GM12878 (cell line): ENCODE measurements at regions of chr3 and their contacts with region 1.

Region 1: GRCh38 chr3:105836533-105836932 is 32.3 kb downstream of the CBLB start:
- DNase-seq: peak; percentile 68
- ATAC-seq: peak; percentile 81
- H3K4me3 ChIP-seq: peak overlapping the region; percentile 33; the same call in 1 of the 2 replicates
- H3K27ac ChIP-seq: peak overlapping the region; percentile 86
- H3K4me1 ChIP-seq: peaks cover 27% of the 10 kb centered on the region
- H3K27me3 ChIP-seq: no peaks in the 10 kb centered on the region
- CTCF ChIP-seq: 0 out of 6 replicates have a peak, but pooled peaks of 1 of the 3 experiments have one; percentile 5
- EP300 ChIP-seq: peak; percentile 80 to 86; a peak in 3 of 4 replicates
- POLR2A ChIP-seq: peak; percentile 31; the same call in 1 of the 2 replicates
- RAD21 ChIP-seq: peak; percentile 27

Region 2: GRCh38 chr3:105334138-105334882 is 502.2 kb before region 1 on chr3:
- CTCF ChIA-PET with region 1: no interaction called
- POLR2A ChIA-PET with region 1: no interaction called
- RAD21 ChIA-PET with region 1: no interaction called
- SMC1A ChIA-PET with region 1: no interaction called
- in situ Hi-C with region 1: no loop called
- intact Hi-C with region 1: no loop called
- DNase-seq: no peak
- ATAC-seq: peak; percentile 54
- H3K4me3 ChIP-seq: no peak overlapping the region
- H3K27ac ChIP-seq: no peak overlapping the region
- H3K4me1 ChIP-seq: no peaks in the 10 kb centered on the region
- H3K27me3 ChIP-seq: no peaks in the 10 kb centered on the region
- CTCF ChIP-seq: no peak
- EP300 ChIP-seq: no peak
- POLR2A ChIP-seq: no peak
- RAD21 ChIP-seq: no peak

Region 3: DNA sequence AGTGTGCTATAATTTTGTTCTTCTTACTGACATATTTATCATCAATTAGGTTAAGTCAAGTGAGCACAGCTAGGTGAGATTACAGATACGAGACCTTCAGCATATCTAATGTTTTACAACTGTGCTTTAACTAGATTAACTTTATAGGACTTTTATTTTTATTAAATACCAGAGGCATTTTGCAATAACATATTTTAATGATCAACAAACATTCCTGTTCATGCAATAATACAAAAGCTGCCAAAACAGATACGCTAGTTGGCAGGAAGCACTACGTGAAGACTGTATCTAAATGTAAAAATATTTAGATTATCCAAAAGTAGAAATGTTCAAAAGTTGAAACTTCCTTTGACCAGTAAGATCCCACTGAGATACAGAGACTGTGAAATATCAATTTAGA is 106.9 kb before region 1 on chr3:
- CTCF ChIA-PET with region 1: no interaction called
- POLR2A ChIA-PET with region 1: no interaction called
- RAD21 ChIA-PET with region 1: interaction called, 4 read pairs
- SMC1A ChIA-PET with region 1: interaction called, 14 read pairs
- in situ Hi-C with region 1: no loop called
- intact Hi-C with region 1: no loop called
- DNase-seq: no peak
- ATAC-seq: no peak
- H3K4me3 ChIP-seq: no peak overlapping the region
- H3K27ac ChIP-seq: no peak overlapping the region
- H3K4me1 ChIP-seq: no peaks in the 10 kb centered on the region
- H3K27me3 ChIP-seq: no peaks in the 10 kb centered on the region
- CTCF ChIP-seq: no peak
- EP300 ChIP-seq: no peak
- POLR2A ChIP-seq: no peak
- RAD21 ChIP-seq: no peak

Region 4: GRCh38 chr3:105812194-105812586 is 24.3 kb before region 1 on chr3:
- CTCF ChIA-PET with region 1: interaction called, 3 read pairs
- POLR2A ChIA-PET with region 1: no interaction called
- RAD21 ChIA-PET with region 1: interaction called, 10 read pairs
- SMC1A ChIA-PET with region 1: interaction called, 59 read pairs
- in situ Hi-C with region 1: no loop called
- intact Hi-C with region 1: no loop called
- DNase-seq: no peak
- ATAC-seq: no peak
- H3K4me3 ChIP-seq: no peak overlapping the region
- H3K27ac ChIP-seq: no peak overlapping the region
- H3K4me1 ChIP-seq: peaks cover 3% of the 10 kb centered on the region; the same call in 1 of the 2 replicates
- H3K27me3 ChIP-seq: no peaks in the 10 kb centered on the region
- CTCF ChIP-seq: no peak
- EP300 ChIP-seq: no peak
- POLR2A ChIP-seq: no peak
- RAD21 ChIP-seq: no peak

Region 5: DNA sequence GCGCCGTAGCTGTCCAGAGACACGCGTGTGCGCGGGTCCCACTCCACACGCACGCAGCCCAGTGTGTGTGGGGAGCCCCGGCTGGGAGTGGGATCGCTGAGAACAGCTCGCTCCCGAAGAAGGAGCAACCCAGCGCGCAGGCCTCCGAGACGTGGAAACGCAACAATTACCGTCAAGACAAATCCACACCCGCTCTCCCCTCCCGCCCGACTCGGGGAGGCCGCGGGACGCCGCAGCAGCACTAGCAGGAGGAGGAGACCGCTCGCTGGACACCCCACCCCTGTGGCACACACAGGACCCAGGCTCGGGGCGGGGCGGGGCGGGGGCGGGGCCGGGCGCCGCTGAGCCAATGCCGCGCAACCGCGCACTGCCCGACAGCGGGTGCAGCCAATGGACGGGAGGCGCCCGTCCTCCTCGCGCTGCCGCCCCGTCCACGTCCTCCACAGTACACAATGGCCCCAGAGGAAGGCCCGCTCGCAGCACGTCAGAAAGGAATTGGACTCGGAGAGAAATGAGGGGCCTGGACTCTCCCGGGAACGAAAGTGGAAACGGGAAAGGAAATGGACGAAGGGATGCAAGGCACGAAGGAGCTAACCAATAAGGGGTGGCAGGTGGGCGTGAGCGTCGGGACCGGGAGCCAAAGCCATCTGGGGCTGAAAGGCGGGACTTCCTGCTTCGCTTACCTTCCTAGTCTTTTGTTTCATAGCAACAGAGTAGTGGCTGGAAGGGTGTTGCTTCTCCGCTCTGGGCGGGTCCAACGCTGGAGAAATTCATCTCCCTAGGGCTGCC is 32.4 kb after region 1 on chr3 and contains the start of gene CBLB:
- CTCF ChIA-PET with region 1: interaction called, 4 read pairs
- POLR2A ChIA-PET with region 1: interaction called, 7 read pairs
- RAD21 ChIA-PET with region 1: interaction called, 119 read pairs
- SMC1A ChIA-PET with region 1: interaction called, 101 read pairs
- in situ Hi-C with region 1: no loop called
- intact Hi-C with region 1: loop called (anchors 1 kb)
- DNase-seq: peak; percentile 77
- ATAC-seq: peak; percentile 92
- H3K4me3 ChIP-seq: peak within 1 kb of the TSS; percentile 98
- H3K27ac ChIP-seq: peak within 1 kb of the TSS; percentile 94
- H3K4me1 ChIP-seq: peaks cover 7% of the 10 kb centered on the region
- H3K27me3 ChIP-seq: no peaks in the 10 kb centered on the region
- CTCF ChIP-seq: no peak
- EP300 ChIP-seq: 0 out of 4 replicates have a peak, but pooled peaks of 1 of the 2 experiments have one; percentile 6
- POLR2A ChIP-seq: peak; percentile 85
- RAD21 ChIP-seq: no peak
- polyA plus RNA-seq, gene CBLB: 17.2 to 17.6 TPM

Region 6: DNA sequence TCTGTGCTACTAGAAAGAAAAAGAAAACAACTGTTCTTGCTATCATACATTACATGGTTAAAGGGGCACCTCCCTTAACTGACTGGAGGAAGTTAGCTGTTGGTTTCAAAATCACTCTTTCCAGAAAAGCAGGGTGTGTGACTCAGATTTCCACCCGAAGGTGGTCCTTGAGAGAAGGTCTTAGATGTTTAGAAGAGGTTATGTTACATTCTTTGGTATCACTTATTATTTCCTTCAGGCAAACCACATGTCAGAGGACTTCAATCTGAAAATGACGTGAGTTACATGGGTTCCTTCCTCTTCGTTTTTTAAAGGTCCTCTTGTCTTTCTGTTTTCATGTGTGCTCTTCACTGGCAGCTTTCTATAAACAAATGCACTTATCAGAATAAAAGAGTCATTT is 340.2 kb after region 1 on chr3:
- CTCF ChIA-PET with region 1: no interaction called
- POLR2A ChIA-PET with region 1: no interaction called
- RAD21 ChIA-PET with region 1: interaction called, 66 read pairs
- SMC1A ChIA-PET with region 1: interaction called, 67 read pairs
- in situ Hi-C with region 1: no loop called
- intact Hi-C with region 1: loop called (anchors 2 kb)
- DNase-seq: peak; percentile 88
- ATAC-seq: peak; percentile 91
- H3K4me3 ChIP-seq: 0 out of 2 replicates have a peak overlapping the region, but pooled peaks have one; percentile 11
- H3K27ac ChIP-seq: peak overlapping the region; percentile 75
- H3K4me1 ChIP-seq: peaks cover 39% of the 10 kb centered on the region
- H3K27me3 ChIP-seq: no peaks in the 10 kb centered on the region
- CTCF ChIP-seq: no peak
- EP300 ChIP-seq: peak; percentile 5 to 67; a peak in 1 of 4 replicates
- POLR2A ChIP-seq: no peak
- RAD21 ChIP-seq: peak; percentile 37; the same call in 1 of the 2 replicates

Region 7: DNA sequence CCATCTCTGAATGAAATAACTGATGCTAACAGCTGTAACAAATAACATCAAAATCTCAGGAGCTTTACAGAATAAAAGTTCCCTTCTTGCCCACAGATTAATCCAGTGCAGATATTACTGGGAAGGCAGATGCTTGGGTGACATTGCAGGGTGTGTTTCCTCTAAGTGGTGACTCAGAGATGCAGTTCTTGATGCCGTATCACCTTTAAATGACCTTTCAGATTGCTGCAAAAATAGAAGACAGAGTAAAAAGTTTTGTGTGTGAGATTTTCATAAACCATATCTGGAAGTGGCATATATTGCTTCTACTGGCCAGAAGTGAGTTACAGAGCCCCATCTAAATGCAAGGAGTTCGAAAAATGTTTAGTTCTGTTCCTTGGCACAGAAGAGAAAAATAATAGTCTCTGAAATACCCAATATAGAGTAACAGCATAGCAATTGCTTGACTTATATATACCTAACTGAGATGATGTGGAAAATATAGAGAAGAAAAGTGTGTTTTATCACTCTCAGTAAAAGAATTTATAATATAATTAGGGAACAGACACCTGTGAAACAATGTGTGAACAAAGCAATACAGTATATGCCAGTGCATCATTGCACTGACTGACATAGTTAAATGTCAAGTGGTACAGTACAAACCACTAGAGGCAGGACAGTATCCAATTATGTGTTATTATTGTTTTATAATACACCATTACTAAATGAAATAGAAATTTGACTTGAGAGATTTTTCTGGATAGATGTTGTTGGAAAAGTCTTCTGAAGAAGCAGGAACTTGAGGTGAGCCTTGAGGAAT is 463.0 kb after region 1 on chr3:
- CTCF ChIA-PET with region 1: no interaction called
- POLR2A ChIA-PET with region 1: interaction called, 7 read pairs
- RAD21 ChIA-PET with region 1: interaction called, 37 read pairs
- SMC1A ChIA-PET with region 1: interaction called, 17 read pairs
- in situ Hi-C with region 1: no loop called
- intact Hi-C with region 1: loop called (anchors 1 kb)
- DNase-seq: peak; percentile 90
- ATAC-seq: peak; percentile 71
- H3K4me3 ChIP-seq: no peak overlapping the region
- H3K27ac ChIP-seq: peak overlapping the region; percentile 92
- H3K4me1 ChIP-seq: peaks cover 47% of the 10 kb centered on the region
- H3K27me3 ChIP-seq: no peaks in the 10 kb centered on the region
- CTCF ChIP-seq: no peak
- EP300 ChIP-seq: peak; percentile 73 to 79; a peak in 2 of 4 replicates
- POLR2A ChIP-seq: no peak
- RAD21 ChIP-seq: 0 out of 2 replicates have a peak, but pooled peaks have one; percentile 6